ENCODE measurements at regions of chr5 and their contacts with region 1.

Region 1: DNA sequence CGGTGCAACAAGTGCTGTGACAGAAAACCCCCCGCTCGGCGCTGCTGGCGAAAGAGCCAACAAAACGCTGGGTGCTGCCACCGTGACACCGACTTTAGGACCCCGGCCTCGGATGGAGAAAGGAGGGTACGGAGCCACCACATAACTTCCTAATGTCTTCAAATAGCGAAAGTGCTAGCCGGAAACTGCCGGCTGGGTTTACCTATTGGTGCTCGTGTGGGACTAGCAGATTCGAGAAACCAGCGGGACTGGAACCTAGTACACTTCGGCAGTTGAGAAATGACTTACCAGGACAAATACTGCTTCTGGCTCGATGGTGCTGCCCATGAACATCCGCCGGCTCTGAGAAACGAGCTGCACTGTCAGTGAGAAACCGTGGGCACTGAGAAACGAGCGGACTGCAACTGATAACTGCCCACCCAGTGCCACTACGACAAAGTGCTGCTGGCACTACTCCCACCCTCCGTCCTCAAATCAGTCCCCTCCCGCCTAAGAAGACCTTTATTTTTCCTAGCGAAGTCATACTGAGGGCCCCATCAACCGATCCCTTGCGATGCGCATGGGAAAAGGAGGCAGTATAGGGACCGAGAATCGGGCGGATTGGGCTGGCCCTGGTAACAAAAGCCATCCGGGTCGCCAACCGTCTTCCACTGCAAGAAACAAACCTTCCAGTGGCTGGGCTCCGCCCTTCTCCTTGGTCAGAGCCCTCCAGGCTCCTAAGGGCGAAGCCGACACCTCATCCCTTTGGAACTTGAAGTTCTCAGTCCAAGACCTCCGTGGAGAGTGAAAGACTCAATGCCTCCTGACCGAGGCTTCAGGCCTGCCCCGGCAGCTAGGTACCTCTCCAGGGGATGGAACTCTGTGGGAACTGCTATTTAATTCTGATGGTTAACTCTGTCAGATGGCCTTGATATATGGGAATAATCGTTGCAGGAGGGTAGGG is 27.0 kb upstream of the ANXA2R start:
- DNase-seq: peak; percentile 98
- ATAC-seq: peak; percentile 42
- H3K4me3 ChIP-seq: peak overlapping the region; percentile 87
- H3K27ac ChIP-seq: peak overlapping the region; percentile 93
- H3K4me1 ChIP-seq: peaks cover 43% of the 10 kb centered on the region
- H3K27me3 ChIP-seq: no peaks in the 10 kb centered on the region
- CTCF ChIP-seq: no peak

Region 2: GRCh38 chr5:42656651-42657015 is 410.4 kb before region 1 on chr5:
- CTCF ChIA-PET with region 1: no interaction called
- POLR2A ChIA-PET with region 1: no interaction called
- intact Hi-C with region 1: no loop called
- DNase-seq: peak; percentile 58
- ATAC-seq: peak; percentile 80
- H3K4me3 ChIP-seq: peak overlapping the region; percentile 44
- H3K27ac ChIP-seq: no peak overlapping the region
- H3K4me1 ChIP-seq: peaks cover 7% of the 10 kb centered on the region; the same call in 1 of the 2 replicates
- H3K27me3 ChIP-seq: no peaks in the 10 kb centered on the region
- CTCF ChIP-seq: peak; percentile 76

Region 3: GRCh38 chr5:42929871-42930270 is 137.2 kb before region 1 on chr5:
- CTCF ChIA-PET with region 1: no interaction called
- POLR2A ChIA-PET with region 1: interaction called, 12 read pairs
- intact Hi-C with region 1: no loop called
- DNase-seq: peak; percentile 39
- ATAC-seq: peak; percentile 38
- H3K4me3 ChIP-seq: no peak overlapping the region
- H3K27ac ChIP-seq: no peak overlapping the region
- H3K4me1 ChIP-seq: 0 out of 2 replicates have a peak, but pooled peaks cover 7% of the 10 kb centered on the region
- H3K27me3 ChIP-seq: no peaks in the 10 kb centered on the region
- CTCF ChIP-seq: no peak

Region 4: GRCh38 chr5:42950440-42951292 is 116.4 kb before region 1 on chr5:
- CTCF ChIA-PET with region 1: interaction called, 3 read pairs
- POLR2A ChIA-PET with region 1: interaction called, 9 read pairs
- intact Hi-C with region 1: loop called (anchors 2 kb)
- DNase-seq: peak; percentile 100
- ATAC-seq: peak; percentile 81
- H3K4me3 ChIP-seq: peak overlapping the region; percentile 64
- H3K27ac ChIP-seq: peak overlapping the region; percentile 94
- H3K4me1 ChIP-seq: peaks cover 30% of the 10 kb centered on the region
- H3K27me3 ChIP-seq: no peaks in the 10 kb centered on the region
- CTCF ChIP-seq: no peak

Region 5: DNA sequence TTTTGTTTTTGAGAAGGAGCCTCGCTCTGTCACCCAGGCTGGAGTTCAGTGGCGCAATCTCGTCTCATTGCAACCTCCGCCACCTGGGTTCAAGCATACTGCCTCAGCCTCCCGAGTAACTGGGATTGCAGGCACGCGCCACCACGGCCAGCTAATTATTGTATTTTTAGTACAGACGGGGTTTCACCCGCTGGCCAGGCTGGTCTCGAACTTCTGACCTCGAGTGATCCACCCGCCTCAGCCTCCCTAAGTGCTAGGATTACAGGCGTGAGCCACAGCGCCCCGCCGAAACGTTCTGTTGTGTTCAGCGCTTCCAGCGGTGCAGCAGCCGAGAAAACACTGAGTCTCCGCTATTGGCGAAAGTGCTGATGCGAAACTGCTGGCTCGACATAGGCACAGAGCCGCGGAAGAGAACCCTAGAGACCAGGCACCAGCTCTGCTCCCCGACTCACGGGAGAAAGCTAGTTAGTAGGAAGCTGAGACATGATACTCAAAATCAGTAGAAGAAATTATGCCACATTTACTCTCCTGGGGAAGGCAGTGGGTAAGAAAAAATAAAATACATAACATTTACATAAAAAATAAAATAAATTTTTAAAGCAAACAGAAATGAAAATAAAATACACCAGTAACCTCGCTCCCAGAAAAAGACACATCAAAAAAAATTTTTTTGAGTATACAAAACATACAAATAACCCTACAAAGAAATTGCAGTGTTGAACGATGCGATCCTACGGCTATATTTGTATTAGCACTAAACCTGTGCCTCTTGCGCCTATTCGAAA is 58.5 kb before region 1 on chr5:
- CTCF ChIA-PET with region 1: no interaction called
- POLR2A ChIA-PET with region 1: no interaction called
- intact Hi-C with region 1: loop called (anchors 1 kb)
- DNase-seq: peak; percentile 98
- ATAC-seq: peak; percentile 64
- H3K4me3 ChIP-seq: peak overlapping the region; percentile 66
- H3K27ac ChIP-seq: peak overlapping the region; percentile 71
- H3K4me1 ChIP-seq: peaks cover 14% of the 10 kb centered on the region; the same call in 1 of the 2 replicates
- H3K27me3 ChIP-seq: no peaks in the 10 kb centered on the region
- CTCF ChIP-seq: peak; percentile 48; the same call in 1 of the 2 replicates

Region 6: DNA sequence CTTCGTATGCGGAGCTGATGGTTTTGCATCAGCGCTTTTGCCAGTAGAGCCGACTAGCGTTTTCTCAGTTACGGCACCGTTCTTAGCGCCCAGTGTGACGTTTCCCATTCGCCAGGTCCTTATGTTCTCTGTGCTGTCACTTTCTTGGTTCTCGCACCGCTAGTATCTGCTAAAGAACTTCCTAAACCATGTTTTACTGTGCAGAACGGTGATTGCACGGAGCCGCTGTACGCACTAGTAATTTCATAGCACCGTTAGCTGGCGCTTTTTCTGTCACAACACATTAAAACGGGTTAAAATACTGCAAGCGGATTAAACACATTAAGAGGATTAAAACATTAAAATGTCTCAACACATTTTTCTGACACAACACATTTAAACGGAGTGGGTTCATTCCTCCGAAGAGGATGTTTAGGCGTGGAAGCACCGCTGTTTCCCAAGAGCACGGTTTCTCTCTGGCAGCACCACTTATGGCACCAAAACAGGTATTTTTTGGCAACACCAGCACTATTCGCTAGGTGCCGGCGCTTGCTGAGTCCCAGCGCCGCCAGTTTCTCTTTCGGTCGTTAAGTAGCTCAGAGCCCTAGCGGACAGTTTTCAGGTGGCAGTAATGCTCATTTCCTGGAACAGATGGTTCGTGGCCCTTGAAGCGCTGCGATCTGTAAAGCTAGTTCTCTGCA is 47.3 kb before region 1 on chr5:
- CTCF ChIA-PET with region 1: interaction called, 3 read pairs
- POLR2A ChIA-PET with region 1: interaction called, 7 read pairs
- intact Hi-C with region 1: loop called (anchors 1 kb)
- DNase-seq: peak; percentile 97
- ATAC-seq: peak; percentile 66
- H3K4me3 ChIP-seq: peak overlapping the region; percentile 80
- H3K27ac ChIP-seq: peak overlapping the region; percentile 85
- H3K4me1 ChIP-seq: peaks cover 39% of the 10 kb centered on the region
- H3K27me3 ChIP-seq: no peaks in the 10 kb centered on the region
- CTCF ChIP-seq: peak; percentile 67

Region 7: DNA sequence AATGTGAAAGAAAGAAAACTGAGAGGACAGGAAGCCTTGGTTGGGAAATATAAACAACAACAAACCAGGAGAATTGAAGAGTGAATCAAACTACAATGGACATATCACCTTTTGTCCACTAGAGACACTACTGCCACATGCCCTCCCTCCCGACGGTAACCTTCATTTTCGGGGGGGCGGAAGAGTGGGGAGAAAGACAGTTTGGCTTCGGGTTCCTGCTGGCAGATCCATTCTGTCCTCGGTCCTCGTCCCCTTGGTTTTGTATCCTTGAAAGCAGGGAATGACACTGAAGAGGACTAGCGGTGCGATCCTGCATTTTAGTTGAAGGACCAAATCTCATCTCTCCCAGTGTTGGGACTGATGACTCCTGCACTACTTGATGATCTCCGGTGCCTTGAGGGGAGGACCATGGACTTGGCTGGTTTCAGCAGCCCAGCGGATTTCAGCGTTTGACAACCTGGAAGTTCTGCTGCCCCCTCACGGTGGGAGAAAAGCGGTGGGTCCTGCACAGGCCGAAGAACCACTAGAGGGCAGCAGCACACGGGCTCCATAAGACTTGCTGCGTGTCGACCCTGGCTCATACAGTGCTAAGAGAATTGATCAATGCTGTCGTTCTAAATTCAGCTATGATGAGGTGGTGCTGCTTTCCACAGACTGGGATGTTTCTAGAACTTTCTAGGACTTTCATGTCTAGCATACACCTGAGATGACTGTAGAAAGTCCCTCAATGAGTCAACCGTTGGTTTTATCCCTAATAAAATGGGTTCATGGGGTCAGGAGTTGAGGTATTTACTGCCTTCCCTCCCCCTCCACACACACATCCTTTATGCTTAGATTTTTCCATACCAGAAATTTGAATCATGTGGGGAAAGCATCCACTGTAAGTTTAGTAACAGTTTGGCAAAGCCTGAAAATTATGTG is 38.6 kb after region 1 on chr5:
- CTCF ChIA-PET with region 1: interaction called, 4 read pairs
- POLR2A ChIA-PET with region 1: no interaction called
- intact Hi-C with region 1: loop called (anchors 2 kb)
- DNase-seq: peak; percentile 98
- ATAC-seq: peak; percentile 93
- H3K4me3 ChIP-seq: peak overlapping the region; percentile 67
- H3K27ac ChIP-seq: peak overlapping the region; percentile 31
- H3K4me1 ChIP-seq: peaks cover 12% of the 10 kb centered on the region
- H3K27me3 ChIP-seq: no peaks in the 10 kb centered on the region
- CTCF ChIP-seq: peak; percentile 100

Measured in PC-3 (cell line).